Thyroid gland (tissue), 4 donors: ENCODE measurements at regions of chr13 and their contacts with region 1.

Region 1: GRCh38 chr13:45119991-45120864 is at the start of gene GTF2F2:
- DNase-seq: peak; percentile 89
- H3K4me3 ChIP-seq: peak within 1 kb of the TSS; percentile 64 to 75 (median 75)
- H3K27ac ChIP-seq: peak within 1 kb of the TSS in 2 of 3 donors; percentile 71 to 74
- H3K4me1 ChIP-seq: peaks cover 9 to 11% of the 10 kb centered on the region in 2 donors
- H3K27me3 ChIP-seq: no peaks in the 10 kb centered on the region
- CTCF ChIP-seq: peak in 2 of 6 experiments; percentile 6 to 25
- POLR2A ChIP-seq: peak in 1 of 2 donors; percentile 65
- total RNA-seq, gene GTF2F2: 15.3 to 22.7 (median 19.6) TPM

Region 2: GRCh38 chr13:44667943-44668342 is 452.3 kb before region 1 on chr13:
- intact Hi-C with region 1: no loop called
- DNase-seq: no peak
- H3K4me3 ChIP-seq: no peak overlapping the region
- H3K27ac ChIP-seq: peak overlapping the region in 1 of 3 donors; percentile 17
- H3K4me1 ChIP-seq: peaks cover 0 to 9% of the 10 kb centered on the region in 2 donors
- H3K27me3 ChIP-seq: no peaks in the 10 kb centered on the region
- CTCF ChIP-seq: no peak
- POLR2A ChIP-seq: no peak

Region 3: DNA sequence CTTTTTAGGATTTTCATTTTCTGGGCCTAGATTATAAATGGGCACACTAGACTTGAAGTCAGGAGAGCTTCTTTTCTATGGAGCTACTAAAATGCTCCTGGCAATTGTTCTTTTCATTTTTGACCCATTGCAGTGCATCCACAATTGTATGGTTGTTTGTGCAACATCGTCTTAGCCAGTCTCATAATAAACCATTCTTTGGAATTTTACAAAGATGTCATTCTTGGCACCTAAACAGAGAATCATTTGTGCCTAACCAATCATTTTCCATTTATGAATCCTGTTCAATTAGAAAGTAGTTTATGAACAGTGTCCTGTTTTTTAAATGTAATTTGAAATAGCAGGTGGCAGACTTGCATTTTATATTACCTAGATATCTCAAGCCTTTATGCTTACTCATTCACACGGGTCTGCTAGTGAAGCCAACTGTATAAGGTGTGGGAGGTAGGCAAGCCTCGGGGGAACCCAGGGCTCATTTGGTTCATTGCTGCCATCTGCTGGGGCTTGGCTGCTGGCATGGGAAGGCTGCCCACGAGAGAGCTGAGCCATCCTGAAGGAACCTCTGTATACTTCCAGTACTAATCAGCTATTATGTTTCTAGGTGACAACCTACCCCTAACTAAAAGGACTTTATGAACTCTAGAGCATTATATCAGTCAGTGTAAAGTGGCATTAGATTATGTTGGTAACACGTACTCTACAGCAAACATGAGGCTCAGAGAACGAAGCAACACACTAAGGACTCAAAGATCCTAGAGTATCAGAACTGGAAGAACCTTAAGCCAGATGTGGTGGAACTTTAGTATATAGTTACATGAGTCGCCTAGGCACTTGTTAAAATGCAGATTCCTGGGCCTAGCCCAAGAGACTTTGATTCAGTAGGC is 160.8 kb after region 1 on chr13:
- intact Hi-C with region 1: loop called (anchors 10 kb)
- DNase-seq: peak; percentile 79 to 82
- H3K4me3 ChIP-seq: no peak overlapping the region
- H3K27ac ChIP-seq: no peak overlapping the region
- H3K4me1 ChIP-seq: no peaks in the 10 kb centered on the region
- H3K27me3 ChIP-seq: no peaks in the 10 kb centered on the region
- CTCF ChIP-seq: peak in 4 of 6 experiments; percentile 72 to 89 (median 83)
- POLR2A ChIP-seq: no peak